ENCODE measurements at regions of chr1 and their contacts with region 1.

Region 1: GRCh38 chr1:228734881-228735801 is at the start of gene RHOU:
- DNase-seq: peak; percentile 80
- H3K4me3 ChIP-seq: peak within 1 kb of the TSS; percentile 92 to 98 (median 95)
- H3K27ac ChIP-seq: peak within 1 kb of the TSS; percentile 92 to 97 (median 96)
- H3K4me1 ChIP-seq: peaks cover 5 to 40% (median 21%) of the 10 kb centered on the region in 4 donors
- H3K27me3 ChIP-seq: no peaks in the 10 kb centered on the region
- CTCF ChIP-seq: peak; percentile 42 to 84 (median 71)
- EP300 ChIP-seq: no peak
- POLR2A ChIP-seq: peak; percentile 83
- total RNA-seq, gene RHOU: 32.0 to 62.5 (median 38.4) TPM

Region 2: DNA sequence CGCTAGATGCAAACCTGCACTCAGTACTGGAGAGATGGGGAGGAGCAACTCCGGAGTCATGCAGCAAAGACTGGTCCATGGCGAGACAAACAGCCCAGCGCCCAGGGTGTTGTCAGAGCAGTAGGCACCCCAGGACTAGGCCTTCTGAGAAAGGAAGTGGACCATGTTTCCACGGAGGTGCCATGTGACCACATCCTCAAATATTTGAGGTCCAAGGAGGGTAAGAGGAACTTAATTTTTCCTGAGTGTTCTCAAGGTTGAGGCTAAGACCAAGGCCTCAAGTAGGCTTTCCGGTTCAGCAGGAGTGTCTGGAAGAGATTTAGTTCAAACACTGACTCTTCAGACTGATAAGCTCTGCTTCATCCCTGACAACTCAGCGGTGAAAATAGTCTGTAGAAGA is 186.3 kb after region 1 on chr1:
- in situ Hi-C with region 1: no loop called
- intact Hi-C with region 1: no loop called
- DNase-seq: no peak
- H3K4me3 ChIP-seq: no peak overlapping the region
- H3K27ac ChIP-seq: no peak overlapping the region
- H3K4me1 ChIP-seq: no peaks in the 10 kb centered on the region
- H3K27me3 ChIP-seq: no peaks in the 10 kb centered on the region
- CTCF ChIP-seq: no peak
- EP300 ChIP-seq: no peak
- POLR2A ChIP-seq: no peak

Region 3: DNA sequence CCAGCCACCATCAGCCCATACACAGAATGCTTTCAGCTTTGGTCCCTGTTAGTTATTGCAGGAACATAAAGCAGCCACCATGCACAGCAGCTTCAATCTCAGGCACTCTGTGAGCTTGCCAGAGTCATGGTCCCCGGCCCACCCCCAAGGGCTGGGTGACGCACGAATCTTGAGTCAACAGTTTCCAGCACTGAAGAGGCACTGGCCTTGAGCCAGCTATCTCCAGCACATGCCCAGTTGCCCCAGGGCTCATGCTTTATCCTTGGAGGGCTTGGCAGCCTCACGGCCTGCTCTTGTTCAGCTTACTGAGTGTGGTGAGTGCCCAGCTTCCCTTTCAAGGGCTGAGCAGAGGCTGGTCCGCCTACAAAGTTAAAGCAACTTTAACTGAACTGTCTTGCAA is 335.0 kb after region 1 on chr1:
- in situ Hi-C with region 1: no loop called
- intact Hi-C with region 1: loop called (anchors 1 kb)
- DNase-seq: peak; percentile 66
- H3K4me3 ChIP-seq: no peak overlapping the region
- H3K27ac ChIP-seq: peak overlapping the region; percentile 7 to 65 (median 50)
- H3K4me1 ChIP-seq: peaks cover 0 to 27% (median 5%) of the 10 kb centered on the region in 4 donors
- H3K27me3 ChIP-seq: no peaks in the 10 kb centered on the region
- CTCF ChIP-seq: no peak
- EP300 ChIP-seq: peak; percentile 81
- POLR2A ChIP-seq: no peak

Region 4: DNA sequence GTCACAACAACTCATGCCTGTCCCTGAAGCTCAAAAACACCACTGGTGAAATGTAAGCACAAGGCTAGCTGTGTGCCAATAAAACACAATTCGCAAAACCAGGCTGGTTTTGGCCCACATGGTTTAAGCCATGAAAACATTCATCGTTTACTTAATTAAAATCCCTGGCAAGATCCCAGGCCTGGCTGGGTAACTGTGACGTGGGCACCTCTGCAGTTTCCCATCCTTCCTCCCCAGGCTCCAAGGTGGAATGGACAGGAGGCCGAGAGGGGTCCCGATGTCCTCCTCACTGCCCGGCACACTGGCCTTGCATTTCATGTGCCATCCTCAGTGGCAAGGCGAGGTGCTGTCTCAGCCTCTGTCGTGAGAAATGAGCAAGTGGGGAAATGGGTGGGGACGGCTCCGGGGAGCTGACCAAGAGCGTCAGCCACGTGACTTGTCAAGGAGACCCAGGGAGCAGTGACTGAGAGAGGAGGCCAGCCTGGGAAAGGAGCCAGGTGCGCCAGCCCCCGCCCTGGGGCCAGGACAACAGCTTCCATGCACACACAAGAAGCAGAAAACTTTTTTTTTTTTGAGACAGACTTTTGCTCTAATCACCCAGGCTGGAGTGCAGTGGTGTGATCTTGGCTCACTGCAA is 382.6 kb after region 1 on chr1:
- in situ Hi-C with region 1: no loop called
- intact Hi-C with region 1: loop called (anchors 1 kb)
- DNase-seq: peak; percentile 65
- H3K4me3 ChIP-seq: no peak overlapping the region
- H3K27ac ChIP-seq: peak overlapping the region; percentile 21 to 82 (median 68)
- H3K4me1 ChIP-seq: peaks cover 4 to 22% (median 7%) of the 10 kb centered on the region in 4 donors
- H3K27me3 ChIP-seq: no peaks in the 10 kb centered on the region
- CTCF ChIP-seq: no peak
- EP300 ChIP-seq: peak; percentile 54
- POLR2A ChIP-seq: no peak

Region 5: DNA sequence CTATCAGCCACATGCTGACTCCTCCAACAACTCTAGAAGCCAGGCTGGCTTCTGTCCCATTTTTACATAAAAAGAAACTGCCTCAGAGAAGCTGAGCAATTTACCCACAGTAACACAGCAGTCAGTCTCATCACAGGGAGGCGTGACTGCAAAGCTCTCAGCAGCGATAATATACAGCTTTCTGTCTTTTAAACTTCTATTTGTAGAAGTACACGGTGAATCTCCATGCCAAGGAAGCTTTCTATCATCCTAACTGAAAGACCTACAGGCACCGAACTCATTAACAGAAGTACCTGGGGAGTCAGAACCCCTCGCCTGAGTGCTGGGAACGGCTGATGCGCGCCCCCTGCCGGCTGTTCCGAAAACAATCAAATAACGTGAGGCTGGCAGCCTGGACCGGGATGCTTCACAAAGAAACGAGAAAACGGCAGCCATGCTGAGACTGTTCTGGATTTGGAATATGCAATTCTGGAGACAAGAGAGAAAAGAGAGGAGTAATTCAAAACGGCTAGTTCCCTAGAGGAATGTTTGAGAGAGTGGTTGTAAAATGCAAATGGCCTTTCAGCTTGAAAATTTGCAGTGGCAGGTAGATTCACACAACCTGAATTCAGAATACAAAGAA is 492.3 kb after region 1 on chr1:
- in situ Hi-C with region 1: loop called in 2 of 4 experiments (anchors 5 to 10 kb)
- intact Hi-C with region 1: no loop called
- DNase-seq: peak; percentile 89
- H3K4me3 ChIP-seq: no peak overlapping the region
- H3K27ac ChIP-seq: no peak overlapping the region
- H3K4me1 ChIP-seq: peaks cover 7 to 36% (median 27%) of the 10 kb centered on the region in 4 donors
- H3K27me3 ChIP-seq: no peaks in the 10 kb centered on the region
- CTCF ChIP-seq: peak; percentile 87 to 90 (median 89)
- EP300 ChIP-seq: no peak
- POLR2A ChIP-seq: no peak

Measured in transverse colon (tissue), 4 donors.